ENCODE measurements at regions of chrX and their contacts with region 1.

Region 1: GRCh38 chrX:152117305-152117704 is 21.1 kb downstream of the MAGEA10 start:
- DNase-seq: no peak
- H3K4me3 Mint-ChIP-seq: no peak overlapping the region
- H3K27ac Mint-ChIP-seq: no peak overlapping the region
- H3K4me1 Mint-ChIP-seq: no peaks in the 10 kb centered on the region
- H3K27me3 Mint-ChIP-seq: no peaks in the 10 kb centered on the region
- CTCF ChIP-seq: no peak

Region 2: DNA sequence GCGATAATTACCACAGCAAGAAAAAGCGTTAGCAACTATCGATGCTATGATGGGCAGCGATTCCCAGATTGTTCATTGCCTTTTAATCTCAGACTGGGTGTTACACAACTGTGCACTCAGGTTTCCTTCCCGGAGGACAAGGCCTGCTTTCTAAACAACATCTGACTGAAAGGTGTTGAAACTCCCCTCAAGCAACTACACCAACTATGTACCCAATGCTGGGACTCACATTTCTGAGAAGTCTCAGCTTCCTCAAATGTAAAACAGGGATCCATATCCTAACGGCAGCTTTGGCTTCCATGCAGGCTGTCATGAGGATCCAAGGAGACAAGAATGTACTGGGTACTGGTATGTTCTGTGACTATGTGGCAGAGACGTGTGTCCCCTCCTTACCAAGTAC is 151.0 kb before region 1 on chrX:
- CTCF ChIA-PET with region 1: no interaction called
- intact Hi-C with region 1: no loop called
- DNase-seq: no peak
- H3K4me3 Mint-ChIP-seq: no peak overlapping the region
- H3K27ac Mint-ChIP-seq: no peak overlapping the region
- H3K4me1 Mint-ChIP-seq: peaks cover 16% of the 10 kb centered on the region
- H3K27me3 Mint-ChIP-seq: no peaks in the 10 kb centered on the region
- CTCF ChIP-seq: no peak

Region 3: GRCh38 chrX:152074163-152074562 is 43.1 kb before region 1 on chrX:
- CTCF ChIA-PET with region 1: interaction called, 10 read pairs
- intact Hi-C with region 1: no loop called
- DNase-seq: no peak
- H3K4me3 Mint-ChIP-seq: no peak overlapping the region
- H3K27ac Mint-ChIP-seq: no peak overlapping the region
- H3K4me1 Mint-ChIP-seq: peaks cover 25% of the 10 kb centered on the region
- H3K27me3 Mint-ChIP-seq: no peaks in the 10 kb centered on the region
- CTCF ChIP-seq: no peak

Region 4: GRCh38 chrX:152245243-152245642 is 127.9 kb after region 1 on chrX:
- CTCF ChIA-PET with region 1: no interaction called
- intact Hi-C with region 1: no loop called
- DNase-seq: no peak
- H3K4me3 Mint-ChIP-seq: no peak overlapping the region
- H3K27ac Mint-ChIP-seq: no peak overlapping the region
- H3K4me1 Mint-ChIP-seq: no peaks in the 10 kb centered on the region
- H3K27me3 Mint-ChIP-seq: peaks cover 12% of the 10 kb centered on the region
- CTCF ChIP-seq: no peak

Region 5: GRCh38 chrX:152465132-152465531 is 347.8 kb after region 1 on chrX:
- CTCF ChIA-PET with region 1: no interaction called
- intact Hi-C with region 1: no loop called
- DNase-seq: no peak
- H3K4me3 Mint-ChIP-seq: no peak overlapping the region
- H3K27ac Mint-ChIP-seq: no peak overlapping the region
- H3K4me1 Mint-ChIP-seq: no peaks in the 10 kb centered on the region
- H3K27me3 Mint-ChIP-seq: no peaks in the 10 kb centered on the region
- CTCF ChIP-seq: no peak

Measured in Calu3 (cell line).